PC-9 (cell line): ENCODE measurements at regions of chr13 and their contacts with region 1.

Region 1: DNA sequence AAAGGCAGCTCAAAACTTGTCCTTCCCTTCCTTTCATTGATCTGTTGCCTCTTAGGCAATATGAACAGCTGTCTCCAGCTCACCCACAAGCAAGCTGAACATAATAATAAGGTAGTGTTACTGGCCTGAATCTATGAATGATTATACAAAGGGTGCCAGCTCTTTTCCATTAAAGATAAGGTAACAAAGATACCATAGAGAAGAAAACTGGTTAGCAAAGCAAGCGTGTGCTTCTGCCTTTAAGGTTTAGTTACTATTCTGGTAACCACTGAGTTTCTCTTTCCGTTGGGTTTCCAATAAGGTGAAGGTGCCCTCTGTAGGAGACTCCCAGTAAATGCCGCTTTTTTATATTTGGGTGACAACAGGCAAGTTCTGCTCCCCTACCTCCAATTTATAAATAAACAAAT is 12.1 kb upstream of the DACH1 start:
- DNase-seq: no peak
- H3K4me3 ChIP-seq: no peak overlapping the region
- H3K27ac ChIP-seq: no peak overlapping the region
- H3K4me1 ChIP-seq: no peaks in the 10 kb centered on the region
- H3K27me3 ChIP-seq: no peaks in the 10 kb centered on the region
- CTCF ChIP-seq: peak; percentile 61

Region 2: DNA sequence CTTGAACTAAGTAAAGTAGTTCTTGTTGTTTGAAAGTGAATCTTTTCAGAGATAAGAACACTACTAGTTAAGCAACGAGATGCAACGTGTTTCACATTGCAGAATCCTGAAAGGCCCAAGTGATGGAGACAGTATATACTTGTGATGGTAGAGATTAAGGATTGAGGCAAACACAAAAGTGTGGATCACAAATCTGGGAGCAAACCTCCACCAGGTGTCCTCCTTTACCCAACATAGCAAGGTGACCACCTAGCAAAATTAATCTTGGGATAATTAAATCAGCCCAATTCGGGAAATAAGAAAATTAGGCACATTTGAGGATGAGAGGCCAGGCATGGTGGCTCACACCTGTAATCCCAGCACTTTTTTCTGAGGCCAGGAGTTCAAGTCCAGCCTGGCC is 576.0 kb before region 1 on chr13:
- CTCF ChIA-PET with region 1: no interaction called
- POLR2A ChIA-PET with region 1: no interaction called
- intact Hi-C with region 1: loop called (anchors 10 kb)
- DNase-seq: no peak
- H3K4me3 ChIP-seq: no peak overlapping the region
- H3K27ac ChIP-seq: no peak overlapping the region
- H3K4me1 ChIP-seq: no peaks in the 10 kb centered on the region
- H3K27me3 ChIP-seq: no peaks in the 10 kb centered on the region
- CTCF ChIP-seq: 0 out of 2 replicates have a peak, but pooled peaks have one; percentile 24

Region 3: DNA sequence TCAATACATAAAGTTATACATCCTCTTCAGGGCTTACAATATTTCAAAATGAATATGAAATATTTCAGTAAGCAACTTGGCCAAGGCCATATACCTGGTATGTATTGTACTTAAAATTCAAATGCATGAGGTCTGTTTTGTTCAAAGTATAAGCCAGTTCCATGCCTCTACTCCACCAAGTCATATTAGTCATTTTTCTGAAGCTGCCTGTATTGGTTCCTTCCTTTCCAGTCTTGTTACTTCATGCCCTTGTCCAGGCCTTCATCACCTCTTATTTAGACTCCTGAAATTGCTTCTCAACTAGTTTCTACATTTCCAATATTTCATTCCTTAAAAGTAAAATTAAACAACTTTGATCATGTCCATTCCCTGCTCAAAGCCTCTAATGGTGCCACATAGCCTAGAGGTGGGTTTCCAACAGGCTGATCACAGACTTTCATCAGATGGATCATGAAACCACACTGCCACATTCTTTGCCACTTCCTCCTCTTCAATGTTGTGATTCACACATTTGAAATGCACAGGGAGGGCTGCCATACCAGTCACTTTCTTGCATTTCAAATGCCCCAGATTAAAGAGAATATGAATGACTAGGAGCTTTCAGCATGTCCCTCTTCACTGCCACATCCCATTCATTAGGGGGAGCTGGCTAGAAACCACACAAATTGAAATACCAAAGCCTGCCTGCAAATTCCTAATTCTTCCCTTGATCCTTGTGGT is 412.0 kb after region 1 on chr13:
- CTCF ChIA-PET with region 1: no interaction called
- POLR2A ChIA-PET with region 1: no interaction called
- intact Hi-C with region 1: loop called (anchors 5 kb)
- DNase-seq: peak; percentile 63 to 71
- H3K4me3 ChIP-seq: no peak overlapping the region
- H3K27ac ChIP-seq: peak overlapping the region; percentile 55
- H3K4me1 ChIP-seq: peaks cover 12% of the 10 kb centered on the region; the same call in 1 of the 2 replicates
- H3K27me3 ChIP-seq: no peaks in the 10 kb centered on the region
- CTCF ChIP-seq: no peak